ENCODE measurements at regions of chr7 and their contacts with region 1.

Region 1: DNA sequence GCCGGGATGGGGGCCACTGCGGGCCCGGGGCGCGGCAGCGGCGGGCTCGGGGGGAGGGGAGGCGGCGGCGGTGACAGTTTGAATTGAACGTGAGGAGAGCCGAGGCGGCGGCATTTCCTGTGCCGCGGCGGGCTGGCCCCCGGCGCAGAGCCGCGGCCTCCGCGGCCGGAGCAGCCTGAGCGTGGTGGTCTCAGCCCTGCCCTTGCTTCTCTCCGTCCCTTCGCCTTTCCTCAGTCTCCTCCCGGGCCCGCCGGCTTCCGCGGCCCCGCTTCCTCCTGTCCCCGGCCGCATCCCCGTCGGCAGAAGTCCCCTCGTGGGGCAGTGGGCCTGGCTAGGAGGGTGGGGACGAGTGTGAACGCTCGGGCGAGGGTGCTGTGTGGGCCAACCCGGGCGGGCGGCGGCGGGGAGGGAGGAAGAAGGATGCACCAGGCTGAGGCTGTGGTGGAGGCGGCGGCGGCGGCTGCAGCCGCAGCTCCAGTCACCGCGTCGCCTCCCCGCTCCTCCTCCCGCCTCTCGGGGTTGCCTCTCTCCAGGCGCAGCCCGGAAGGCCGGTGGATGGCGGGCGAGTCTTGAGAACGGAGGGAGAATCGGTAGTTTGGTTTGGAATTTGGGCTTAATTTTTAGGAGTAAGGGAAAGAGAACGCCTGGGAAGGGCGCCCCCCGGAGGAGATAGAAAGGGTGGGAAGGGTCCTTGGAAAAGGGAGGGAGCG is 690 bp downstream of the SEPTIN7 start:
- H3K4me3 Mint-ChIP-seq: peak overlapping the region; percentile 98
- H3K27ac Mint-ChIP-seq: peak overlapping the region; percentile 86
- H3K4me1 Mint-ChIP-seq: peaks cover 54% of the 10 kb centered on the region
- H3K27me3 Mint-ChIP-seq: no peaks in the 10 kb centered on the region

Region 2: GRCh38 chr7:35694781-35695472 is 106.6 kb before region 1 on chr7 and contains the start of gene HERPUD2:
- intact Hi-C with region 1: loop called (anchors 1 kb)
- H3K4me3 Mint-ChIP-seq: peak within 1 kb of the TSS; percentile 98
- H3K27ac Mint-ChIP-seq: peak within 1 kb of the TSS; percentile 99
- H3K4me1 Mint-ChIP-seq: peaks cover 43% of the 10 kb centered on the region
- H3K27me3 Mint-ChIP-seq: no peaks in the 10 kb centered on the region

Region 3: DNA sequence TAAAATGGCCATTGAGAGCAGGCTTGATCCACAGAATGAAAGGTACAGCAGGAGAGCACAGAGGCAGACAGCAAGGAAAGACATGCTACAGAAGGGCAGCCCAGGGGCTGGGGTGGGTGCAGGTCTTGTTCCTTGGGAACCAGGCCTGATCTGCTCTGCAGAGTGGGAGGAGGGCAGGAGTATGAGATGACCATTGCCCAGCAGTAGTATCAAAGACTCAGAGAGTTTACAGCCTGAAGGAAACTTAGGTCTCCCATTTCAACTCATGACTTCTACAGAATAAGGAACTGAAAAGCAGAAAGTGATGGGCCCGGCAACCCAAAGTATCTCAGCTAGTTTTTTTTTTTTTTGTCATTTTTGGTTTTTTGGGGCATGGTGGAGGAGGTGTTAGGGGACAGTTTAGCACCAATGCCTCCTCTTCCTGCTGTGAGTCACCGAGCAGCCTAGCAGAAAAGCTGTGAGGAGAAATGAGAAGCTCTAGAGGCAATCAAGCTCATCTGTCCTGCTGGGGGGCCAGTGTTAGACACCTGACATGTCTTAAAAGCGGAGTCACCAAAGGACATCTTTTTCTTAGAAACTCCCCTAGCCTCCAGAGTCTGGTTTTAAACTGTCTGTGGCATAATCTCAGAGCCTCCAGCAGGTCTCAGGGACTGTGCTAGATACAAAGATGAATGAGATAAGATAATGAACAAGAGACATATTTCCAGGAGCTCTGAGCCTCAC is 72.3 kb before region 1 on chr7:
- intact Hi-C with region 1: loop called (anchors 1 kb)
- H3K4me3 Mint-ChIP-seq: peak overlapping the region; percentile 45
- H3K27ac Mint-ChIP-seq: peak overlapping the region; percentile 87
- H3K4me1 Mint-ChIP-seq: peaks cover 74% of the 10 kb centered on the region
- H3K27me3 Mint-ChIP-seq: peaks cover 5% of the 10 kb centered on the region

Region 4: GRCh38 chr7:35753761-35754603 is 47.6 kb before region 1 on chr7:
- intact Hi-C with region 1: no loop called
- H3K4me3 Mint-ChIP-seq: no peak overlapping the region
- H3K27ac Mint-ChIP-seq: no peak overlapping the region
- H3K4me1 Mint-ChIP-seq: peaks cover 6% of the 10 kb centered on the region
- H3K27me3 Mint-ChIP-seq: no peaks in the 10 kb centered on the region

Region 5: DNA sequence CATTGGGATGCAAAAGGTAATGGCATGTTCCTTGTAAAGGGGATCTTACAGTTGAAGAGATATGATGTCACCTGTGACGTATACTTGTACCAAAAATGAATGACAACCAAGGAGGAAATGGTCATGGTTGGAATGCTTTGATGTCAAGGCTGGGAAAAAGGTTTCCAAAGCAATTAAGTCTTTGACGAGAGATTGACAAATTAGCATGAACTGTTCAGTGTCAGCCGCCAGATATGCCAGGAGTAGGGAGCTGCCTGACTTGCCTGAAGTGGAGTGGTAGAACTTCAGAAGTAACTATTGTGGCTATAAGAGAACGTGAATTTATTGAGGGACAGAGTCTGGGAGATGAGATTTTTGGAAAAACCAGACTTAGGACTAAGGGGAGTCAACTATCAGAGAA is 87.5 kb after region 1 on chr7:
- intact Hi-C with region 1: loop called (anchors 10 kb)
- H3K4me3 Mint-ChIP-seq: no peak overlapping the region
- H3K27ac Mint-ChIP-seq: no peak overlapping the region
- H3K4me1 Mint-ChIP-seq: peaks cover 23% of the 10 kb centered on the region
- H3K27me3 Mint-ChIP-seq: no peaks in the 10 kb centered on the region

Measured in dendritic cell treated with granulocyte-macrophage colony-stimulating factor and Interleukin-4, amounts not matched to agents 40 ng/mL and 50 ng/mL, for 4 days (primary cell).